MCF 10A (cell line): ENCODE measurements at regions of chr2 and their contacts with region 1.

Region 1: GRCh38 chr2:10302479-10303180 is at the start of gene HPCAL1:
- DNase-seq: peak; percentile 87
- H3K4me3 Mint-ChIP-seq: peak within 1 kb of the TSS; percentile 98
- H3K27ac Mint-ChIP-seq: peak within 1 kb of the TSS; percentile 90
- H3K4me1 Mint-ChIP-seq: peaks cover 26% of the 10 kb centered on the region
- H3K27me3 Mint-ChIP-seq: no peaks in the 10 kb centered on the region
- CTCF ChIP-seq: peak; percentile 81
- total RNA-seq, gene HPCAL1: 136 and 144 TPM in 2 replicates

Region 2: DNA sequence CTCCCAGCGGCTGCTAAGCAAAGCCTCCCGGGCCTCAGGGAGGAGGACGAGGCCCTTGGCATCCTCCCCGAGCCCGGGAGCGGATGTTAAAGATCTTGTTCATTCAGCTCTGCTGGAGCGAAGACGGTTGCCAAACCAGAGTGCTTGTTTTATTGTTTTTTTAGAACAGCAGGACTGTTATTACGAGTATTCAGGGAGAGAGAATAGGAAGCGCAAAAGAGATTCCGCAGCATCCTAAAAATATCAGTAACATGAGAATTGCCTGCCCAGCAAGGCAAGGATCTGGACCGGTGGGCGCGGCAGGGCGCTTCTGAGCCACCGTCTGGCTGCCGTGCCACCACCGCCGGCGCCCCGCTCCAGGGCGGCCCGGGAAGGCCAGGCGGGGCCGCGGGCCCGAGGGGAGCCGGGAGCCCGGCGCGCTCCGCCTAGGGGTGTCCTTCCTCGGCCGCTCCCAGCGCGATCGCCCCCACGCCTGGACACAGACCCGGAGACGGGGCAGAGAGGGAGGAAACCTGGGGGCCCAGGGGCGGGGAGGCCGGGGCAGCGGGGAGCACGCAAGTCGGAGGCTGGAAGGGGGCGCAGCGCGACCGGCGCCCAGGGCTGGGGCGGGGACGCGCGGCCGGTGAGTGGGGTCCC is 223.3 kb before region 1 on chr2:
- CTCF ChIA-PET with region 1: no interaction called
- POLR2A ChIA-PET with region 1: no interaction called
- intact Hi-C with region 1: loop called (anchors 5 kb)
- DNase-seq: peak; percentile 30
- H3K4me3 Mint-ChIP-seq: peak overlapping the region; percentile 62
- H3K27ac Mint-ChIP-seq: no peak overlapping the region
- H3K4me1 Mint-ChIP-seq: no peaks in the 10 kb centered on the region
- H3K27me3 Mint-ChIP-seq: peaks cover 89% of the 10 kb centered on the region
- CTCF ChIP-seq: no peak

Region 3: DNA sequence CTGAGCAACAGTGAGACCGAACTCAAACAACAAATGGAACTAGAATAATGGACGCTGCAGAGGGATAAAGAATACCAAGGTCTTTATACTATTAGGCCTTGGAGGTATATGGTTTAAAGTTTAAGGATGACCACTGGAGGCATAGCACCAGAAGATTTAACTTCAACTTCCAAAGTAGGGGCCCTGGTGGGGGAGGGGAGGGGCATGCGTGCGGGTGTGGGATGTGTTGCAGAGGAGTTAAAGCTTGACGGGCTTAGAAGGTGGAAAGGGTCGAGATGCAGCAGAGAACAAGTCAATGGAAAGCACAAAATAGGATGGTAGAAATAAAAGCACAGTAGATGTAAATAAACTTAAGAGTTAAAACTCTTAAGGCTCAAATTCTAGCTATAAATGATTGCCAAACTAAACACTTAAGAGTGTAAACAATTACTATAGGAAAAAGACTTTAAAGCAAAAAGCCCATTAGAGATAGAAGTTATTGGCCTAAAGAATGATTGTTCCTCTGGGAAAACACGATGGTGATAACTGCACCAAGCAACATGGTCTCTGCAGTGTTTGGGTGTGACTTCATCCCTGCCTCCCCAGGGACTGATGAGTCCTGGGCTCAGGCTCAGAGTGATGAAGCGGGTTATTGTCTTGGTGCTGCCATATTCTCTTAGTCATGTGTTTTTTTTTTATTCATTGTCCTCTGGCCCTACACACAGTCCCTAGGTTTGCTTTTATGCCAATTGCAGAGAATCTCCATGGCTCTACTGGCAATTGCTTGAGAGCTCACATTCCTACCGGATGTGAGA is 167.1 kb before region 1 on chr2:
- CTCF ChIA-PET with region 1: interaction called, 4 read pairs
- POLR2A ChIA-PET with region 1: interaction called, 3 read pairs
- intact Hi-C with region 1: loop called (anchors 5 kb)
- DNase-seq: peak; percentile 57
- H3K4me3 Mint-ChIP-seq: no peak overlapping the region
- H3K27ac Mint-ChIP-seq: peak overlapping the region; percentile 66
- H3K4me1 Mint-ChIP-seq: peaks cover 19% of the 10 kb centered on the region
- H3K27me3 Mint-ChIP-seq: no peaks in the 10 kb centered on the region
- CTCF ChIP-seq: no peak

Region 4: GRCh38 chr2:10162586-10163497 is 139.8 kb before region 1 on chr2:
- CTCF ChIA-PET with region 1: interaction called, 4 read pairs
- POLR2A ChIA-PET with region 1: interaction called, 3 read pairs
- intact Hi-C with region 1: loop called (anchors 2 kb)
- DNase-seq: no peak
- H3K4me3 Mint-ChIP-seq: no peak overlapping the region
- H3K27ac Mint-ChIP-seq: no peak overlapping the region
- H3K4me1 Mint-ChIP-seq: peaks cover 8% of the 10 kb centered on the region
- H3K27me3 Mint-ChIP-seq: no peaks in the 10 kb centered on the region
- CTCF ChIP-seq: no peak

Region 5: GRCh38 chr2:10175441-10175840 is 127.2 kb before region 1 on chr2:
- CTCF ChIA-PET with region 1: no interaction called
- POLR2A ChIA-PET with region 1: no interaction called
- intact Hi-C with region 1: no loop called
- DNase-seq: no peak
- H3K4me3 Mint-ChIP-seq: no peak overlapping the region
- H3K27ac Mint-ChIP-seq: no peak overlapping the region
- H3K4me1 Mint-ChIP-seq: no peaks in the 10 kb centered on the region
- H3K27me3 Mint-ChIP-seq: no peaks in the 10 kb centered on the region
- CTCF ChIP-seq: no peak

Region 6: DNA sequence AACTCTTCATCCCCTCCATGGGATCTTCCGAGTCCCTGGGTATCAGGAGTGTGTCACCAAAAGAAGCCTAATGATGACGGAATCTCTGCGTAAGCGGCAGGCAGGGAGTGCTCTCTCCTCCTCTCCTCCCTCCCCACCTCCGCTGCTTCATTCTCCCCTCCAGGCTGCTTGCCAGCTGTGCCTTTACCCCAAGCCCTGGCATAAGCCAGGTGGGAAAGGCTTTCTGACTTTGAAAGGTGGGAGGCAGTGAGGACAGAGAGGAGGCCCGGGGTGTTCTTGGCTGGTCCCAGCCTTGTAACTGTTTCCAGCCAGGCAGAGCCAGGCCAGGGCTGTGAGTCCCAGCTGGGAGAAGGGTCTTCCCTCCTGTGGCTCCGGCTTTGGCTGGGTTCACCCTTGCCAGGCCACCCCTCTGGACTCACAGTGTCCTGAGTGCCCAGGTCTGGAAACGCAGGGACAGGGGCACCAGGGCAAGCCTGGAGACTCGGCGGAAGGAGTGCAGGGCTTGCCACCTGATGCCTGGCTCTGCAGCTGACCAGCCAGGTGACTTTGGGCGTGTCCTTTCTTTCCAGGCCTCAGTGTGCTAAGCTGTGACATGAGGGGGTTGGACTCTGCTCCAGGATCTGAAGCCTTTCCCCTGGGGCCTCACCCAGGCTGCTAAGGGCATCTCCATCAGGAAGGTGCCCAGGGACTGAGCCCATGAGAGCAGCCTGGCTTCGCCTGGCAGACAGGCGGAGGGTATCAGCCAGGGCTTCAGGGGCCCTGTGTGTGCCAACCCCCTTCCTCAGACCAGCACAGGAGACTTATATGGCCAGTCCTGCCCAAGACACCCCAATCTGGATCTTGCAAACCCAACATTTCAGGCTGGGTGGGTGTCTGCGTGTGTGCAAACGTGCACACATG is 32.7 kb before region 1 on chr2:
- CTCF ChIA-PET with region 1: interaction called, 3 read pairs
- POLR2A ChIA-PET with region 1: interaction called, 3 read pairs
- intact Hi-C with region 1: loop called (anchors 1 kb)
- DNase-seq: no peak
- H3K4me3 Mint-ChIP-seq: no peak overlapping the region
- H3K27ac Mint-ChIP-seq: peak overlapping the region; percentile 54
- H3K4me1 Mint-ChIP-seq: peaks cover 19% of the 10 kb centered on the region
- H3K27me3 Mint-ChIP-seq: no peaks in the 10 kb centered on the region
- CTCF ChIP-seq: no peak

Region 7: DNA sequence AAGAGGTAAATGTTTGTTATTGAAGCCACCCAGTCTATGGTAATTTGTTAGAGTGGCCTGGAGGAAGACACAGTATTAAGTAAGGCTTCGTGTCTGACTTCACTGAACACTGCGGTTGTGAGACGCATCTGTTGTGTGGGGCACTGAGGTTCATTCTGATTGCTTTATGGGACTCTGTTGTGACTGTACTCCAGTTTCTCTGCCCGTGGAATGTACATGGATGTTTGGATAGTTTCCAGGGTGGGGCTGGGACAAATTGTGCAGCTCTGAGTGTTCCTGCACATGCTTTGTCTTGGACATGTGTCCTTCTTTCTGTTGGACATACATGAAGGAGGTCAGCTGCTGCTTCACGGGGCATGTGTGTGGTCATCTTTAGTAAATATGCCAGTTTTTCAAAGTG is 86.9 kb after region 1 on chr2:
- CTCF ChIA-PET with region 1: interaction called, 5 read pairs
- POLR2A ChIA-PET with region 1: interaction called, 9 read pairs
- intact Hi-C with region 1: loop called (anchors 5 kb)
- DNase-seq: peak; percentile 59
- H3K4me3 Mint-ChIP-seq: peak overlapping the region; percentile 50
- H3K27ac Mint-ChIP-seq: peak overlapping the region; percentile 87
- H3K4me1 Mint-ChIP-seq: peaks cover 57% of the 10 kb centered on the region
- H3K27me3 Mint-ChIP-seq: no peaks in the 10 kb centered on the region
- CTCF ChIP-seq: no peak